ENCODE measurements at regions of chr2 and their contacts with region 1.

Region 1: GRCh38 chr2:204615456-204615855 is 70.2 kb downstream of the PARD3B start:
- DNase-seq: no peak
- ATAC-seq: no peak
- H3K4me3 ChIP-seq: no peak overlapping the region
- H3K4me3 Mint-ChIP-seq: no peak overlapping the region
- H3K27ac ChIP-seq: no peak overlapping the region
- H3K27ac Mint-ChIP-seq: no peak overlapping the region
- H3K4me1 ChIP-seq: no peaks in the 10 kb centered on the region
- H3K4me1 Mint-ChIP-seq: no peaks in the 10 kb centered on the region
- H3K27me3 ChIP-seq: no peaks in the 10 kb centered on the region
- H3K27me3 Mint-ChIP-seq: peaks cover 3 to 14% of the 10 kb centered on the region in 2 donors

Region 2: DNA sequence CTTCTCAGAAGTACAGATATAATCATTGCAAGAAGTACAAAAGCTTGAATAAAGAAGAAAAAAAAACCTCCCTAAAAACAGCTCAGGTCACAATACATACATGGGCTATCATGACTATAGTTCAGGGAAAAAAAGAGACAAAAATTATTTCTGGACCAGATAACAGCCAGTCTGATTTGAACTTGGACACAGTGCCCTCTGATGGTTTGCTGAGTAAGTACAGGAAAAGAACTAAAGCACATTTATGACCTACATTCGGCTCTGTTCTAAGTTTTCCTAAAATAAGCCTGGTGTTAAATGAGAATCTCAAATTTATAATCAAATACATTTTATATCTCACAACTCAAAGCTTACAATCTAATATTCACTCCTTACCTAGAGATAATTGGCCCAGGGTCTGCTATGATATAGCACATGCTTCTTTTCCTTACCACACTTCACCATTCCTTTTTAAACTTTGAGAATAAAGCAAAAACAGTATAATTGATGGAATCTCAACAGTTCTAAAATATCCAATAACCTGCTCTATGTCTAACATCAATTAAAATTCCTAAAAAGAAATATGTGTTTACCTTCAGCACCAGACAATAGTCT is 1161.5 kb before region 1 on chr2:
- CTCF ChIA-PET with region 1: interaction called in 1 of 2 experiments, 15 read pairs
- POLR2A ChIA-PET with region 1: no interaction called
- DNase-seq: peak in 14 of 35 experiments; percentile 1 to 69 (median 14)
- ATAC-seq: peak in 3 of 4 experiments; percentile 29 to 60 (median 34)
- H3K4me3 ChIP-seq: no peak overlapping the region
- H3K4me3 Mint-ChIP-seq: no peak overlapping the region
- H3K27ac ChIP-seq: no peak overlapping the region
- H3K27ac Mint-ChIP-seq: no peak overlapping the region
- H3K4me1 ChIP-seq: no peaks in the 10 kb centered on the region
- H3K4me1 Mint-ChIP-seq: peaks cover 0 to 4% (median 0%) of the 10 kb centered on the region in 3 donors
- H3K27me3 ChIP-seq: no peaks in the 10 kb centered on the region
- H3K27me3 Mint-ChIP-seq: no peaks in the 10 kb centered on the region

Measured in T-cell (primary cell).